Activated CD8-positive, alpha-beta T cell treated with anti-CD3 and anti-CD28 coated beads for 36 hours (primary cell): ENCODE measurements at regions of chr3 and their contacts with region 1.

Region 1: DNA sequence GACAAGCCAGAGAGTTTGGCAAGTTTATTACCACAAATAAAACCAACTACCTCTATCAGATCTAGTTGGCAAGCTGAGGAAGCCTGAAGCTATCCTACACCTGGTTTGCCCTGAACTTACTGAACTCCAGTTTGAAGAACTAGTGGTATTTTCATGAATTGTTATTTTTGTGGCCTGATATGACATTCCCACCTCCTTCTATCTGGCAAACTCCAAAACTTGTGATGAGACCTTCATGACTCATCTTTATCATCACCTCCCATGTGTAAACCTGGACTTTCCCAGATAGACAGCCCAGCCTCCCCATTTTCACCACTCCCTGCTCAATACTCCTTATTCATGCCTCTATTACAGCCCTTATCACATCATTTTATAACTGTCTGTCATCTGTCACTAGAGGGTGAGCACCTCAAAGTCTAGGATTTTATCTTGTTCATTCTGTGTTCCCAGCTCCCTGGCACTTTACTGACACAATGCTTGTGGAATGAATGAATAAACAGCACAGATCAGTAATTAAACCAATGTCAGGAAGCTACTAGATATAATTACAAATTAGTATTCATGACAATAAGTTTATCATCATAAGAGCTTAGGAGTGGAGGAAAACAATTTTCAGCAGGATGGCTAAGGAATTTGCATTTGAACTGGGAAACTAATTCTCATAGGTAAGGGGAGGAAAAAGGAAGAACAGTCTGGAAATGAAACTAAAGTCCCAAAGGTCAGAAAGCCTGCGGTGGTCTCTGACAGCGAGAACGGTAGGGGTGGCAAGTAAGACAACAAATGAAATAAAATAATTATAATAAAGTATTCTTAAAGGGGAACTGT is 13.2 kb upstream of the TRANK1 start:
- DNase-seq: no peak
- ATAC-seq: no peak
- H3K4me3 Mint-ChIP-seq: peak overlapping the region; percentile 4
- H3K27ac Mint-ChIP-seq: no peak overlapping the region
- H3K4me1 Mint-ChIP-seq: peaks cover 21% of the 10 kb centered on the region
- H3K27me3 Mint-ChIP-seq: no peaks in the 10 kb centered on the region
- CTCF ChIP-seq: no peak

Region 2: GRCh38 chr3:36447061-36447460 is 511.0 kb before region 1 on chr3:
- CTCF ChIA-PET with region 1: no interaction called
- POLR2A ChIA-PET with region 1: no interaction called
- intact Hi-C with region 1: no loop called
- DNase-seq: no peak
- ATAC-seq: no peak
- H3K4me3 Mint-ChIP-seq: no peak overlapping the region
- H3K27ac Mint-ChIP-seq: no peak overlapping the region
- H3K4me1 Mint-ChIP-seq: no peaks in the 10 kb centered on the region
- H3K27me3 Mint-ChIP-seq: no peaks in the 10 kb centered on the region
- CTCF ChIP-seq: no peak

Region 3: GRCh38 chr3:36734742-36735141 is 223.3 kb before region 1 on chr3:
- CTCF ChIA-PET with region 1: interaction called, 27 read pairs
- POLR2A ChIA-PET with region 1: no interaction called
- intact Hi-C with region 1: loop called (anchors 2 kb)
- DNase-seq: no peak
- ATAC-seq: no peak
- H3K4me3 Mint-ChIP-seq: no peak overlapping the region
- H3K27ac Mint-ChIP-seq: no peak overlapping the region
- H3K4me1 Mint-ChIP-seq: no peaks in the 10 kb centered on the region
- H3K27me3 Mint-ChIP-seq: no peaks in the 10 kb centered on the region
- CTCF ChIP-seq: no peak

Region 4: GRCh38 chr3:36811769-36812168 is 146.3 kb before region 1 on chr3:
- CTCF ChIA-PET with region 1: no interaction called
- POLR2A ChIA-PET with region 1: no interaction called
- intact Hi-C with region 1: no loop called
- DNase-seq: no peak
- ATAC-seq: no peak
- H3K4me3 Mint-ChIP-seq: no peak overlapping the region
- H3K27ac Mint-ChIP-seq: no peak overlapping the region
- H3K4me1 Mint-ChIP-seq: no peaks in the 10 kb centered on the region
- H3K27me3 Mint-ChIP-seq: no peaks in the 10 kb centered on the region
- CTCF ChIP-seq: no peak

Region 5: DNA sequence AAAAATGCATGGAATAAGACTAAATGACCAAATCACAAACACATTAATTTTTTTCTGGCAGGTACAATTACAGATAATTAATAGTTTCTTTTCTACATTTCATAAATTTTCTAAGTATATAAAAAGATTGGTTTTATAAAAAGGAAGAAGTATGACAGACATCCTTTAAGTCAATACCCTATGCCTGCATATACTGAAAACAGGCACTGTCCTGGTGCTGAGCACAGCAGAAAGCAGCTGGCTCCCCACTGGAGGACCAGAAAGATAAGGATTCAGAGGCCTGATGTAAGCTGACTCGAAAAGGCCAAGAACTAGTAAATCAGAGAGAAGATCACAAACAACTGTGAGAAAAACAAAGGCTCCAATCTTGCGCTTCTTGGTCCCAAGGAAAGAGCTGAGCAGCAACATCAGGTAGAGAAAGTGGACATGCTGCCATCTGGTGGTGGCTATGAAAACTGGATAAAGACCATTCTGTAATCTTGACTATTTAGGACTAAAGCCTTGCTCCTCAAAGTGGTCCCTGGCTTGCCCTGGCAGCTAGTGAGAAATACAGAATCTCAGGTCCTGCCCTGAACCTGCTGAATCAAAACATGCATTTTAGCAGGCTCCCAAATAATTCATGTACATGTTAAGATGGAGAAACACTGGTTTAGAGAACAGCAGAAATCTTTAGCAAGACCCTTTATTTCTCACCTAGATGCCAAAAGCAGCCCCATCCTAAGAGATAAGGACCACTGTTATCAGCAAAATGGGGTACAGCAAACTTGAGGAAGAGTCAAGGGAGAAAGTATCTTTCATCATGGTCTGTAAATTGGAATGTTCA is 89.2 kb before region 1 on chr3:
- CTCF ChIA-PET with region 1: interaction called, 52 read pairs
- POLR2A ChIA-PET with region 1: no interaction called
- intact Hi-C with region 1: loop called (anchors 2 kb)
- DNase-seq: peak; percentile 63
- ATAC-seq: peak; percentile 85
- H3K4me3 Mint-ChIP-seq: no peak overlapping the region
- H3K27ac Mint-ChIP-seq: no peak overlapping the region
- H3K4me1 Mint-ChIP-seq: peaks cover 13% of the 10 kb centered on the region
- H3K27me3 Mint-ChIP-seq: no peaks in the 10 kb centered on the region
- CTCF ChIP-seq: peak; percentile 81

Region 6: GRCh38 chr3:36903119-36903882 is 54.8 kb before region 1 on chr3:
- CTCF ChIA-PET with region 1: interaction called, 49 read pairs
- POLR2A ChIA-PET with region 1: interaction called, 7 read pairs
- intact Hi-C with region 1: loop called (anchors 5 kb)
- DNase-seq: peak; percentile 42
- ATAC-seq: peak; percentile 45
- H3K4me3 Mint-ChIP-seq: peak overlapping the region; percentile 1
- H3K27ac Mint-ChIP-seq: peak overlapping the region; percentile 44
- H3K4me1 Mint-ChIP-seq: peaks cover 55% of the 10 kb centered on the region
- H3K27me3 Mint-ChIP-seq: no peaks in the 10 kb centered on the region
- CTCF ChIP-seq: no peak

Region 7: GRCh38 chr3:36944012-36944640 is 13.9 kb before region 1 on chr3:
- CTCF ChIA-PET with region 1: interaction called, 29 read pairs
- POLR2A ChIA-PET with region 1: interaction called, 3 read pairs
- intact Hi-C with region 1: no loop called
- DNase-seq: peak; percentile 52
- ATAC-seq: peak; percentile 59
- H3K4me3 Mint-ChIP-seq: peak overlapping the region; percentile 77
- H3K27ac Mint-ChIP-seq: peak overlapping the region; percentile 57
- H3K4me1 Mint-ChIP-seq: peaks cover 26% of the 10 kb centered on the region
- H3K27me3 Mint-ChIP-seq: no peaks in the 10 kb centered on the region
- CTCF ChIP-seq: no peak